ENCODE measurements at regions of chr2 and their contacts with region 1.

Region 1: DNA sequence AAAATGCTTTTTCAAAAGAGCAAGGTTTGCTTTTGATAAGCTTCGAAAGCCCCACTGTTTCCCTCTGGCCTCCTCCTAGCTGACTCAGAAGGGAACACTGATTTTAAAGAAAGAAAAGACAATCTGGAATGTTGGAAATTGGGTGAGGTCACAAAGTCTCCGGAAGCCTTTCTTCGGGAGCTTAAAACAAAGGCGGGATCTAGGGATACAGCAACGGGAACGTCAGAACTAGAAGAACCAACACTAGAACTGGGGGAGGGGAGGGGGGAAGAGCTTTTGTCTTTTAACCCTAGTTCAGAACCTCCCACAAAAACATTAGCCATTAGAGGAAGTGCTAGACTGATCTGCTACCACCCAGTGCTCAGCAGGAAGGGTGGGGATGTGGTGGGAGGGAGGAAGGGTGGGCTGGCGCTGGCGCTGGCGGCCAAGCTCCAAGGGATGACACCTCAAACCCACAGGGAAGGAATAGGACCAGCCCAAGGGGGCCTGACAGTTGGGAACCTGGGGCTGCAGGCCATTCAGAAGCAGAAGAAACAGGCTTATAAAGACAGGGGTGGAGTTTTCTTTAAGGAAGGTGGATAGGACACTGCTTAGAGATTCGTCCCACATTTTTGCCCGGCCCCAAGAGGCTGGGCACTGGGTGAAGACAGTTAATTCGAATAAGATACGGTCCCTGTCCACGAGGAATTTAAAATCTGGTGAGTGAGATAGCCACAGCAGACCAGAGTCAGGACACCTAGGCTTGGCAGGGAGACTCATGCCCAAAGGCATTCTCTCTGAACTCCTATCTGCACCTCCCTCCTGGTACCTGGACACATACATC is 1.7 kb downstream of the TMSB10 start:
- DNase-seq: no peak
- ATAC-seq: peak; percentile 48
- H3K4me3 ChIP-seq: peak overlapping the region; percentile 82 to 99
- H3K27ac ChIP-seq: peak overlapping the region; percentile 76
- H3K4me1 ChIP-seq: peaks cover 18% of the 10 kb centered on the region
- H3K27me3 ChIP-seq: no peaks in the 10 kb centered on the region
- CTCF ChIP-seq: no peak

Region 2: GRCh38 chr2:84793582-84793981 is 113.6 kb before region 1 on chr2:
- CTCF ChIA-PET with region 1: no interaction called
- POLR2A ChIA-PET with region 1: interaction called, 11 read pairs
- in situ Hi-C with region 1: no loop called
- intact Hi-C with region 1: no loop called
- DNase-seq: no peak
- ATAC-seq: no peak
- H3K4me3 ChIP-seq: no peak overlapping the region
- H3K27ac ChIP-seq: no peak overlapping the region
- H3K4me1 ChIP-seq: no peaks in the 10 kb centered on the region
- H3K27me3 ChIP-seq: no peaks in the 10 kb centered on the region
- CTCF ChIP-seq: no peak

Region 3: GRCh38 chr2:84840306-84840705 is 66.8 kb before region 1 on chr2:
- CTCF ChIA-PET with region 1: no interaction called
- POLR2A ChIA-PET with region 1: no interaction called
- in situ Hi-C with region 1: no loop called
- intact Hi-C with region 1: no loop called
- DNase-seq: no peak
- ATAC-seq: 0 out of 2 replicates have a peak, but pooled peaks have one; percentile 60
- H3K4me3 ChIP-seq: no peak overlapping the region
- H3K27ac ChIP-seq: no peak overlapping the region
- H3K4me1 ChIP-seq: no peaks in the 10 kb centered on the region
- H3K27me3 ChIP-seq: no peaks in the 10 kb centered on the region
- CTCF ChIP-seq: no peak

Region 4: DNA sequence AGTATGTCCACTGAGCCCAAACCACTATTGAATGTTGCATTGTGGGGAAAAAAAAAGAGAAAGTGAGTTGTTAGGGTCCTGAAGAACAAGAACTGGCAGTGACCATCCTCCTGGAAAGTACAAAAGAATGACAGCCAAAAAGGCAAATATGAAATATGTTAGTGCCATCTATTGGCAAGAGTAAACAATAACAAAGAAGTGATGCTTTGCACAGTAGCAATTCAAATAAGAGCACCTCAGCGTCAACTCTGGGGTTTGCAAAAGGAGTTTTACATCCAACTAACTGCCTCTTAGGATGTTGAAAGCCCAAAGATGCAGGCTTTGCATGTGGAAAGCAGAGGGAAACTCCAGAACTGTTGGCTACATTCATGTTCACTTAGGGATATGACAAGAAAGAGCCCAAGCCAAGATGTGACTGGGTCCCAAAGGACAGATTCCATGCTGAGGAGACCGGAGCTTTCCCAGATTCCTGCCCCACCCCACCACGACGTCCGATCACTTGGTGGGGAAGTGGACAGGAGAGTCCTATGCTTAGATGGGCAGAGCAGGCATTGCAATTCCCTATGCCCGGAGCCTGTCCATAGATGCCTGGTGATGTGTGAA is 41.9 kb before region 1 on chr2:
- CTCF ChIA-PET with region 1: interaction called, 13 read pairs
- POLR2A ChIA-PET with region 1: no interaction called
- in situ Hi-C with region 1: no loop called
- intact Hi-C with region 1: no loop called
- DNase-seq: no peak
- ATAC-seq: peak; percentile 65
- H3K4me3 ChIP-seq: no peak overlapping the region
- H3K27ac ChIP-seq: no peak overlapping the region
- H3K4me1 ChIP-seq: no peaks in the 10 kb centered on the region
- H3K27me3 ChIP-seq: peaks cover 4% of the 10 kb centered on the region; the same call in 1 of the 2 replicates
- CTCF ChIP-seq: peak; percentile 63

Region 5: GRCh38 chr2:84971510-84972206 is 64.5 kb after region 1 on chr2:
- CTCF ChIA-PET with region 1: no interaction called
- POLR2A ChIA-PET with region 1: interaction called, 10 read pairs
- in situ Hi-C with region 1: no loop called
- intact Hi-C with region 1: no loop called
- DNase-seq: no peak
- ATAC-seq: peak; percentile 63
- H3K4me3 ChIP-seq: peak overlapping the region; percentile 73 to 93
- H3K27ac ChIP-seq: peak overlapping the region; percentile 93
- H3K4me1 ChIP-seq: peaks cover 26% of the 10 kb centered on the region
- H3K27me3 ChIP-seq: no peaks in the 10 kb centered on the region
- CTCF ChIP-seq: no peak

Region 6: DNA sequence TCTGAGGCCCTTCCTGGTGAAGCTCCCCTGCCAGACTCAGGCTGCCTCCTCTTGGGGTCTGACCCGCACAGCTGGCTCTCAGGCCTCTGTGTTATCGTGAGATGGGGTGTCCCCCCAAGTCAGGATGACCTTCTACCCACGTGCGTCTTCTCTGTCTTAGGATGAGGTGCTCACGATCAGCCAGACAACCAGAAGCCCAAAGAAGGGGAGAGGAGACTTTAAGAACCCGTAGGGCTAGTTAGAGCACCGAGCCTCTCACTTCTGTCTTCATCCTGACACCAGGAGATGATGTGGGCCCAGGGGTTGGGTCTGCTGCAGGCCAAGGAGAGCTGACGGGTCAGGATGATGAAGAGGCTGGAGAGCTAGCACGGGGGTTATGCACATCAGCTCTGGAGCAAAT is 482.0 kb after region 1 on chr2:
- CTCF ChIA-PET with region 1: no interaction called
- POLR2A ChIA-PET with region 1: no interaction called
- in situ Hi-C with region 1: no loop called
- intact Hi-C with region 1: no loop called
- DNase-seq: no peak
- ATAC-seq: no peak
- H3K4me3 ChIP-seq: no peak overlapping the region
- H3K27ac ChIP-seq: no peak overlapping the region
- H3K4me1 ChIP-seq: no peaks in the 10 kb centered on the region
- H3K27me3 ChIP-seq: no peaks in the 10 kb centered on the region
- CTCF ChIP-seq: no peak